Sciatic nerve (tissue), 2 donors: ENCODE measurements at regions of chr17 and their contacts with region 1.

Region 1: DNA sequence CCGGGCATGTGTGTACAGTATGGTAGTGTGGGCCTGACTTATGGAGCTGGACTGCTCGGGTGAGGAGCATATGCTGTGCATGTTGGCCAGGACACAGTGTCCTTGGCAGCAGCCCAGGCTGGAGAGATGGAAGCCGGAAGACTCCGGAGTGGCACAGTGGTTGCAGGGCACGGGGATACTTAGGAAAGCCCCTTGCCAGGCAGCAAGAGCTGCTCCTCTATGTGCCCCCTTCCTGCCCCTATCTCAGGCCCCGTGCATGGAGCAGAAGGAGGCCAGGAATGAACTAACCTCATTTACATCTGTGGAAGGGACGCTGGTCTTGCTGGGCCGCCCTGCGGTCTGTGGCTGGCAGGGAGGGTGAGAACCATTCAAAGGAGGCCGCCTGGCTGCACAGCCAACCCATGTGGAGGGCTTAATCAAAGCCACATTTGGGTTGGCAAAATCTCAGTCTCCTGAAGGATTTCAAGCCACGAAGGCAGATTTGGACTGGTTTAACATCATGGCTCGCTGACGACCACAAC is 32.2 kb upstream of the RCVRN start:
- DNase-seq: no peak
- ATAC-seq: peak; percentile 79

Region 2: GRCh38 chr17:8697323-8697741 is 1240.0 kb before region 1 on chr17:
- intact Hi-C with region 1: no loop called
- DNase-seq: peak; percentile 39
- ATAC-seq: no peak

Region 3: GRCh38 chr17:8857919-8858318 is 1079.4 kb before region 1 on chr17:
- intact Hi-C with region 1: loop called (anchors 5 kb)
- DNase-seq: peak; percentile 66
- ATAC-seq: peak; percentile 60

Region 4: DNA sequence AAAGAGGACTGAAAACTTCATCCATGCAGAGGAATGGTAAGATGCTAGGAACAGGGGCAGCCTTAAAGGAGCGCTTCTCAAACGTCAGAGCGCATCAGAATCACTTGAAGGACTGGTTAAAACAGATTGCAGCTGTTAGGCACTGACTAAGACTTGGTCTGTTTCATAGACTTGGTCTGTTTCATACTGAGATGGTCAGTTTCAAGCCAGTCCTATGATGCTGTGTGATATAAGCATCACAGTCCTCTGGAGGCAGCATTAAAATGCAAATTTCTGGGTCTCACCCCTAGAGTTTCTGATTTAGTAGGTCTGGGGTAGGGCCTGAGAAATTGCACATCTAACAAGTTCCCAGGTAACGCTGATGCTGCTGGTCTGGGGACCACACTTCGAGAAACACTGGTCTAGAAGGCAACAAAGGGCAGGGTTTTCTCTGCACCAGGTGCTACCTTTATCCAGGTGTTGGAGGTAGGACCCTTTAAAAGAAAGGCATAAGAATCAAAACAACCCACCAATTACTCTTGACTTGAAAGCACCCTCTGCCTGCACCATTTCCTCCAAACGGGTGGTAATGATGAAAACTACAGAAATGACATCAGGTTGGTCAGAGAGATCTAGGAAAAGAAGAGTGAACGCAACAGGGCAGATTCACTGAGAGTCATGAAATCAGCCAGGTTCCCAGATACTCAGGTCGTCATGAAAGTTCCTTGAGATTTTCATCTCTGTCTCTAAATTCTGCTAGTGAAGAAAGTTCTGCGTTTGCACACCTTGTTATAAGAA is 62.8 kb after region 1 on chr17:
- intact Hi-C with region 1: no loop called
- DNase-seq: no peak
- ATAC-seq: no peak

Region 5: DNA sequence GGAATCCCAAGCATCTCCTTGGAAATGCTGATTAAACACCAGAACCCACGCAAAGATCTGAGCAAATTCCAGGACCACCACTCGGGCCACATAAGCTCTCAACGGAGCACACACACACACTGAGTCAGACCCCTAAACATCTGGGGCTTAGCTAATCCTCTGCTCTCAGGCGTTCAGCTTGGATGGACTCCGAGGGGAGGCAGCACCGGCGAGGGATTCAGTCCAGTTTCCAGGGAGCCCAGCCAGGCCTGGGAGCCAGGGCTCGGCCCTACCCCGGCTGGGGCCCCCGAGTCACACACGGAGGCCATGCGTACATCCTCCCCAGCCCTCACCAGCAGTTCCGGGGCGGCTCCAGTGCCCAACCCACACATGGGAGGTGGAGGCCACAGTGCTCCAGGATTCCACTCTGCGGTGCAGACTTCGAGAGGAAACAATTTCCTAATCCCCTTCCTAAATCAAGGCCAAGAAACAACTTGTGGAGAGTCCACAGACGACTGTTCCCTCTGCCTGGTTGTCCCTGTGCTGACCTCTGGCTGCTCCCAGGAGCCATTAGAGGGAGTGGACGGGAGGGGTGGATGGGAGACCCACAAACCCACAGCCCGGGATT is 190.6 kb after region 1 on chr17:
- intact Hi-C with region 1: loop called (anchors 10 kb)
- DNase-seq: peak; percentile 89
- ATAC-seq: peak; percentile 90